Pancreas (tissue), 10 donors: ENCODE measurements at regions of chr10 and their contacts with region 1.

Region 1: DNA sequence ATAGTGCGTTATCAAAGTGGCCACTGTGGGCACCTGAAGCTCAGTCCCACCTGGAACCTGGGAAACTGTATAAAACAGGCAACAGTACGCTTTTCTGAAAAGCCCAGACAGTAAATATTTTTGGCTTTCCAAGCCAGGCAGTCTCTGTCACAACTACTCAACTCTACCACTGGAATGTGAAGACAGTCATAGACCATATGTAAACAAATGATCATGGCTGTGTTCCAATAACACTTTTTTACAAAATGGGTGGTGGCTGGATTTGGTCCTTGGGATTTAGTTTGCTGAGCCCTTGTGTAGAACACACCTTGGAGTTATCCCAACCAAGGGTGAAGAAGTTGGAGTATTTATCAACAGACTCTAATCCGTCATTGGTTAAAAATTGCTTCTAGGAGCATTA is 259.9 kb downstream of the SKIDA1 start:
- DNase-seq: no peak
- ATAC-seq: no peak
- H3K4me3 ChIP-seq: no peak overlapping the region
- H3K27ac ChIP-seq: no peak overlapping the region
- H3K4me1 ChIP-seq: no peaks in the 10 kb centered on the region
- H3K27me3 ChIP-seq: no peaks in the 10 kb centered on the region
- CTCF ChIP-seq: no peak

Region 2: DNA sequence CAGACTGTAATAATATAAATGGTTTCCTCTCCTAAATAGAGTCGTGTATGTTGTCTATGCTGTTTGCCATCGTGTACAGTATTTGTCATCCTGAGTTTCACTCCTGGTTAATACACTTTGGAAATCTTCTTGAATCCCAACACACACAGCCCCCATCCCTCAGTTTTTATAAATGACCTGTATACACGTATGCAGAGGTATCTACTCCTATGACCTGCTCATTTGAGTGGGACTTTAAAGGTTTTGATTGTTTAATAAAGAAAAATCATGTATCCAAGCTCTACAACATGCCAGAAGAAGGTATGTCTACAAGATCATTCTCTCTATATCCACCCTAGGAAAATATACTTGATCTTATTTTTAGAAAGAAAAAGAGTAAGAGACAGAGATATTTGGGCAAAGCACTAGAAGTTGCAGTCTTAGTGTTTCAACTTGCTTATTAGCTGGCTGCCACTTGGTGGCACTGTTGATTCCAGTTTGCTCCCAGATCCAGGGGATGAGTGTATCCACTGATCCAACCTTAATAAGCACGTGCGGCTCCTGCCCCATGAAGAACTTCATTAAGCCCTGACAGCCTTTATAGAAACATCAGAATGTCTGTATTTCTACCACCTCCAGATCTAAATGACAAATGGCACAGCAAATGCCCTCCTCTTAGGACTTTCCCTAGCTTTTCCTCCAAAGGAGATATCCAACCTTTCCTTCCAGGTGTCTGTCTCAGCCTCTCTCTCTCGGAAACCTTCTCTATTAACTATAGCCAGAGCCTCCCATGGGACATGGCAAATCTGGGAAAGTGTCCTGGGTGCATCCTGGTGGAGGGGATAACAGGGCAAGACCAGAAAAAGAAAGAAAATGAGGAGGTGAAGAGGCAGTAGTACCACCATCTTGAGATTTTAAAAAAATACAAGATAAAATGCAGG is 187.0 kb before region 1 on chr10:
- intact Hi-C with region 1: loop called (anchors 5 to 10 kb)
- DNase-seq: peak in 5 of 6 donors; percentile 26 to 75 (median 50)
- ATAC-seq: peak; percentile 90 to 98 (median 96)
- H3K4me3 ChIP-seq: no peak overlapping the region
- H3K27ac ChIP-seq: no peak overlapping the region
- H3K4me1 ChIP-seq: no peaks in the 10 kb centered on the region
- H3K27me3 ChIP-seq: no peaks in the 10 kb centered on the region
- CTCF ChIP-seq: peak; percentile 29 to 62 (median 42)

Region 3: GRCh38 chr10:21083871-21084295 is 181.7 kb before region 1 on chr10:
- intact Hi-C with region 1: loop called (anchors 5 to 10 kb)
- DNase-seq: no peak
- ATAC-seq: no peak
- H3K4me3 ChIP-seq: no peak overlapping the region
- H3K27ac ChIP-seq: no peak overlapping the region
- H3K4me1 ChIP-seq: no peaks in the 10 kb centered on the region
- H3K27me3 ChIP-seq: no peaks in the 10 kb centered on the region
- CTCF ChIP-seq: no peak

Region 4: GRCh38 chr10:21242915-21243314 is 22.7 kb before region 1 on chr10:
- intact Hi-C with region 1: no loop called
- DNase-seq: no peak
- ATAC-seq: no peak
- H3K4me3 ChIP-seq: no peak overlapping the region
- H3K27ac ChIP-seq: no peak overlapping the region
- H3K4me1 ChIP-seq: no peaks in the 10 kb centered on the region
- H3K27me3 ChIP-seq: no peaks in the 10 kb centered on the region
- CTCF ChIP-seq: no peak